Posterior cingulate gyrus (tissue), 11 donors: ENCODE measurements at regions of chrX and their contacts with region 1.

Region 1: GRCh38 chrX:15674841-15675489 is 10.4 kb upstream of the CLTRN start:
- DNase-seq: peak; percentile 77 to 98 (median 90)

Region 2: GRCh38 chrX:15471016-15471415 is 203.9 kb before region 1 on chrX:
- intact Hi-C with region 1: no loop called
- DNase-seq: peak in 8 of 10 donors; percentile 39 to 90 (median 56)

Region 3: GRCh38 chrX:15493118-15493962 is 181.6 kb before region 1 on chrX and contains the start of gene PIR:
- intact Hi-C with region 1: loop called (anchors 10 kb)
- DNase-seq: peak; percentile 71 to 97 (median 79)

Region 4: DNA sequence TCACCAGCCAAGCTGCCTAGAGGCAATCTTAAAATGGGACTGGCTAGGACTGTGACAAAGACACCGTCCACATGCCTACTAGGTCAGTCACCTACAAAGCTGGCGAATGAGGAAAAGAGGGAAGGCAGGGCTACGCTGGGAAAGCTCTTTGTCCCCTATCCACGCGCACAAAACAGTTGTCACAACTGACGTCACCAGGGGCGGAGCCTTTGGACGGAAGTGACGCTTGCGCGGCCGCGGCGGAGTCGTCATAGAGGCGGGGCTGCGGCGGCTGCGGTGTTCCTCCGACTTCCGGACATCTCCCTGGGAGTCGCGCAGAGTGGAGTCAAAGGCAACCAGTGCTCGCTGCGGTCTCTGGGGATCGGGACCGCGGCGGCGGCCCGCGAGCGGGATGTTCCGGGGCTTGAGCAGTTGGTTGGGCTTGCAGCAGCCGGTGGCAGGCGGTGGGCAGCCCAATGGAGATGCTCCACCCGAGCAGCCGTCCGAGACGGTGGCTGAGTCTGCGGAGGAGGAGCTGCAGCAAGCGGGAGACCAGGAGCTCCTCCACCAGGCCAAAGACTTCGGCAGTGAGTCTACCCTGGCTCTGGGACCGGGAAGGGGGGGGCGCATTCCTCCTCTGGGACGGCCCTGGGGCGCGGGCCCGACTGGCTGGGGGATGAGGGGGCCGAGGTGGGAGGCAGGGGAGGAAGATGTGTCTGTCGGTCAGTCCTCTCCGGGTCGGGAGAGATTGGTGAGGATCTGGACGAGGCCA is 1044.5 kb after region 1 on chrX and contains the start of gene SYAP1:
- intact Hi-C with region 1: no loop called
- DNase-seq: peak; percentile 92 to 100 (median 97)